Posterior cingulate gyrus (tissue), 11 donors: ENCODE measurements at regions of chr7 and their contacts with region 1.

Region 1: DNA sequence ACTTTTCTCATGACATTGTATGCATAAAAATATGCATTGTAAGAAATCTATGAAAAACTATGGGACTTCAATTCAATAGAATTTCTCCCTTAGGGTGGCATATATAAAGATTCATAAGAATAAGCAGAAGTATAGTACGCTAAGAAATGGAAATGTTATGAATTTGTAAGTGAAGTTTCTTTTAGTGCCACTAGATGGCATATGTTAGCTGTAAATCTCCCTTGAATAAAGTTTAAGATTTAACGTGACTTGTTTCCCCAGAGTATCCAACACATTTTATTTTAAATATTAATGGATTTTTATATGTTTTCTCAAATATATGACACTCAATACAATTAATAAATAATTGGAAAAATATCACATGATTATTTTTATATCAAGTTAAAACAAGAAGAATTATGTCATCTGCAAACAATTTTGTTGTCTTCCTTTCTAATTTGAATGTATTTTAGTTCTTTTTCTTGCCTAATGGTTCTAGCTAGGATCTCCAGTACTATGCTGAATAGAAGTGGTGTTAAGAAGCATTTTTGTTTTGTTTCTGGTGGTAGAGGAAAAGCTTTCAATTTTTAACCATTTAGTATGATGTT is 287.2 kb downstream of the HGF start:
- DNase-seq: no peak

Region 2: GRCh38 chr7:81956520-81956919 is 473.8 kb after region 1 on chr7:
- intact Hi-C with region 1: loop called (anchors 5 kb)
- DNase-seq: peak in 1 of 10 donors; percentile 9

Region 3: DNA sequence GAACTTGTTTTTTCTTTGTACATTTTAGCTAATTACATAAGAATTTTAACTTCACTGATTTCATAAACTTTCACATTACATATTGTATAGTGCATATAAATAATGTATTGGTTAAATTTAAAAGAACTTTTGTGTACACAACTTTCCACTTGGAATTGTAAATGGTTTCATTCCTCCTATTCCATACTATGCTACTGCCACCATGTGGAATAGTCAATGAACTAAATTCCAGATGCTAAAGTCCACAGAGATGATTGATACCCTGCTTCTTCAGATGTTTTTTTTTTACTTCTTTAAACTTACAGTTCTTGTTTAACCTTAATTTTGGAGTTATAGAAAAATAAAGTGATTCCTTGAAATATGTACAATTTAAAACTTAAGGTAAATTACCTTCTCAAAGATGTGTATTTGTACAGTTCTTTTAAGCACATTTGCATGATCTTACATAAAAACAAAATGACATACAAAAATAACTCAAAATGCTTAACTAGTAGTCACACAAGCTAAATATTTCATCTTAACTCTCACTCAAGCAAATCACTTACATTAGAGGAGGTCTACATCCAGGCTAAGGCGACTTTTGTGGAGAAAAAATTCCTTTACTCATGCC is 534.7 kb after region 1 on chr7:
- intact Hi-C with region 1: loop called (anchors 5 kb)
- DNase-seq: no peak

Region 4: DNA sequence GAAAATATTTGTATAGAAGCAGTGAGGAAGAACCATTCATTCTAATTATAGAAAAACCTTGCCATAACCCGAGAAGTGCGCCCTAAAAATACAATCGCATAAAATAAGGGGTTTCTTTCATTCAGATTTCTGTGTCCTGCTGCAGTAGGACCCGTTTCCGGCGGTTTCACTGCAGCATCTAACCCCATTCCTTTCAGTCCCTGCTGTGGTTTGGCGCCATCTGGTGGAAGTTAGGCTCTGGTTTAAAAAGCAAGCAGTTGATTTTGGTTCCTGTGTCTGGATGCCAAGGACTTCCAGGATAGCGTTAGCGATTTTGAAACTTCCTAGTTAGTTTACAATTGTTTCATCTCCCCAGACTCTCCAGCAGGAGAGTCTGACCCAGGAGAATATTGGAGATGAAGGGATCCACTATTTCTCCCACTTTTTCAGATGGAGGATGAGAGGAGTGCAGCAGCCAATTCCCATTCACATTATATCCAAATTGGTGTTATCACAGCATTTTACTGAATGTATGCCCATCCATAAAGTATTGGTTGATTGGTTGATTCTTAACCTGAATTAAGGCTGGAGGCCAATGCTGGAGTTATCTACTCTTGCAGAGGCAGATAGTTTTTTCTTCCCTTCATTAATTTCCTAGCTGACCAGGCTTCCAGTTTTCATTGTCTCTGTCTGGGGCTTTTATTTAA is 1089.6 kb after region 1 on chr7:
- intact Hi-C with region 1: loop called (anchors 2 kb)
- DNase-seq: peak; percentile 65 to 96 (median 90)